ENCODE measurements at regions of chr11 and their contacts with region 1.

Region 1: GRCh38 chr11:106087815-106088435 is 10.5 kb downstream of the AASDHPPT start:
- DNase-seq: peak in 12 of 14 experiments; percentile 6 to 67 (median 24)
- ATAC-seq: peak; percentile 83
- H3K4me3 ChIP-seq: no peak overlapping the region
- H3K4me3 Mint-ChIP-seq: no peak overlapping the region
- H3K27ac ChIP-seq: no peak overlapping the region
- H3K27ac Mint-ChIP-seq: peak overlapping the region; percentile 5
- H3K4me1 ChIP-seq: no peaks in the 10 kb centered on the region
- H3K4me1 Mint-ChIP-seq: peaks cover 65% of the 10 kb centered on the region
- H3K27me3 ChIP-seq: no peaks in the 10 kb centered on the region
- H3K27me3 Mint-ChIP-seq: no peaks in the 10 kb centered on the region
- CTCF ChIP-seq: peak; percentile 86

Region 2: GRCh38 chr11:105489446-105489845 is 598.5 kb before region 1 on chr11:
- CTCF ChIA-PET with region 1: no interaction called
- POLR2A ChIA-PET with region 1: no interaction called
- intact Hi-C with region 1: no loop called
- DNase-seq: no peak
- ATAC-seq: no peak
- H3K4me3 ChIP-seq: no peak overlapping the region
- H3K4me3 Mint-ChIP-seq: no peak overlapping the region
- H3K27ac ChIP-seq: no peak overlapping the region
- H3K27ac Mint-ChIP-seq: no peak overlapping the region
- H3K4me1 ChIP-seq: no peaks in the 10 kb centered on the region
- H3K4me1 Mint-ChIP-seq: no peaks in the 10 kb centered on the region
- H3K27me3 ChIP-seq: no peaks in the 10 kb centered on the region
- H3K27me3 Mint-ChIP-seq: peaks cover 4% of the 10 kb centered on the region
- CTCF ChIP-seq: no peak

Region 3: DNA sequence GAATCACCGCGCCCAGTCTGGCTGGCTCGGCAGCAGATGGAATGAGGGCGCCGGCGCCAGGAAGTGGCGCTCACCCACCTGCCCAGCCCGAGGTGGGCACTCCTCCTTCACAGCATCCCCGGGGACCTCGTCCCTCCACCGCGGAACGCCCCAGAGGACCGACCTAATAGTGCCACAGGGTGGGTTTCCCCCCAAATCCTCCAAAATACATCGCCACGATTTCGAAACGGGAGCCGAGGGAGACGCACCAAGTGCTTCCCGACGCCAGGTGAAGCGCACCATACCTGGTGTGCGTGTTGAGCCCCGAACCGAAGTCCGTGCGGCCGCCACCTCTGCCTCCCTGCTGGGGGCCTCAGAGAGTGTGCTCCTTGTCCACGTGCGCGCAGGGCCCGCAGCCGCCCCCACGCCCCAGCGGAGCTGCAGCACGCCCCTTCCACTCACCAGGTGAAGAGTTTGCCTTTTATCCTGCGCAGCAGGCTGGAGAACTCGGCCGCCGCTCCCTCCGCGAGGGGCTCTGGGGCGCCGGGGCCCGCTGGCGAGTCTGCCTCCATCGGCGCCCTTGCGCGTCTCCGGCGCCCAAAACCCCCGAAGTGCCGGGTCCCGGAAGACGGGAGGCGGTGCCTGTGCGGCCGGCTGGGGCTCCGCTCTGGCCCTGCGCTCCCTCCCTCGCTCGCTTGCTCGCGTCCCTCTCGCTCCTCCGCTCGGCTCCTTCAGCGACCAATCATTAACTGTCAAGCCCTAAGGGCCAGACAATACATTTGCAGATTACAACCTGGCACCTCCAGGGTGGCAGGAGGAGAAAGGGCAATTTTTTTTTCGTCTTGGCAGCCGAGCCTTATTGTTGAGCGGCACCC is 1770.5 kb after region 1 on chr11 and contains the start of gene SLC35F2:
- CTCF ChIA-PET with region 1: no interaction called
- POLR2A ChIA-PET with region 1: no interaction called
- intact Hi-C with region 1: loop called in 1 of 2 experiments (anchors 10 kb)
- DNase-seq: peak; percentile 15 to 86 (median 58)
- ATAC-seq: peak; percentile 73
- H3K4me3 ChIP-seq: peak within 1 kb of the TSS; percentile 94
- H3K4me3 Mint-ChIP-seq: peak within 1 kb of the TSS; percentile 100
- H3K27ac ChIP-seq: no peak within 1 kb of the TSS
- H3K27ac Mint-ChIP-seq: peak within 1 kb of the TSS; percentile 85
- H3K4me1 ChIP-seq: peaks cover 26% of the 10 kb centered on the region
- H3K4me1 Mint-ChIP-seq: peaks cover 28% of the 10 kb centered on the region
- H3K27me3 ChIP-seq: no peaks in the 10 kb centered on the region
- H3K27me3 Mint-ChIP-seq: no peaks in the 10 kb centered on the region
- CTCF ChIP-seq: no peak
- total RNA-seq, gene SLC35F2: 2.8 to 3.0 TPM